ENCODE measurements at regions of chr2 and their contacts with region 1.

Region 1: DNA sequence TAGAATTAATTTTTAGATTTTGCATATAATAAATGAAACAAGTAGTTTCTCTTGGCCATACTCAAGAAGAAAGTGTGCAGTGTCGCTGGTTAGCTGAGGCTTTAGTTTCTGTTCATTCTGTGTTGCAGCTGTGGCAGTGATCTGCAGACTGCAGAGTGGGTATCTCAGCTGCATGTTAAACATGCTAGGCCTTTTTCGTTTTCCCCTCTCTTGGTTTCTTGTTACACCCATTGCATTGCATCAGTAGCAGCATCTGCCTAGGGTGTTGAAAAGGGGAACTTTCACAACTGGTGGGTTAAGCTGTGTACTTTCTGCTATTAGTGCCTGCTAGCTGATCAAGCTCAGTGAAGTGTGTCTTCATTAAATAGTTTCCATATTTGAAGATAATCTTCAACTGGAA is 51.3 kb downstream of the ACSL3 start:
- DNase-seq: peak; percentile 23
- ATAC-seq: peak; percentile 97
- H3K4me3 Mint-ChIP-seq: peak overlapping the region; percentile 75
- H3K27ac Mint-ChIP-seq: peak overlapping the region; percentile 89
- H3K4me1 Mint-ChIP-seq: peaks cover 53% of the 10 kb centered on the region
- H3K27me3 Mint-ChIP-seq: no peaks in the 10 kb centered on the region
- CTCF ChIP-seq: no peak

Region 2: DNA sequence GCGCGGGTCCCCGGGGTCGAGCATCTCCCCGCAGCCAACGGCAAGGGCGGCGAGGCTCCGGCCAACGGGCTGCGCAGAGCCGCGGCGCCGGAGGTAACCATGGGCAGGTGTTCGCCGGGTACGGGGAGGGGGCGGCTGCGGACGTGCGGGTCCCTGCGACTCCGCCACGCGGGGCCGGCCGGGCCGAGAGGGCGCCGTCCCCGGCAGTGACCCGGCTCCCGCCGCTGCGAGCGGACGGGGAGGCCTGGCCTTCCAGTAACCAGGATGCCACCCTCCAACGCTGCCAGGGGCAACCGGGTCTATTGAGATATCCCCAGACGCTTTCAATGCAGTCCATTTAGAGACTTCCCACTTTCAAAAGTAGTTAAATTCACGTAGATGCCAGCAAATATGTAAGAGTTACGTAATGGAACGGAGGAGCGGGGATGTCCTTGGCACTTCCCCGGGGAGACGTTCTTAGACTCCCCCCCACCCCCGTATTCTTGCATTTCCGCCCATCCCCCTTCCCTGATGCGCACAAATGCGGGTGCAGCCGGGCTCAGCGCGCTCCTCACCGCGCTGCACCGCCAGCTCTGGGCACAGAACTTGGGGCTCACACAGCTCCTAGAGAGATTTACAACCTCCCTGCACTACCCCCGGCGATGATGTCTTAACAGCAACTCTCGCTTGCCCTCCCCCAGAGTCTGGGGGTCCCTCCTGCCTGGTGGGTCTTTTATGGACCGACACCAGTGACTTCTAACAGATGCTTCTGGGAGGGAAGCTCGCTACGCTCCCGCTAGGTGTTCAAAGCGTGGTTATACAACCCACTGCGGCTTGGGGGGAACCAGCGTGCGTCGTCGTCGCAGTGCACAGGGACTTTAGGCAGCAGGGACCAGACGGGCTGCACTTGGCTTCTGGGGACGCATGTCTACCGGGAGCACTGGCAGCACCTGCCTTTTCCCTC is 487.1 kb before region 1 on chr2:
- CTCF ChIA-PET with region 1: no interaction called
- POLR2A ChIA-PET with region 1: no interaction called
- intact Hi-C with region 1: loop called (anchors 5 kb)
- DNase-seq: peak; percentile 32
- ATAC-seq: peak; percentile 42
- H3K4me3 Mint-ChIP-seq: peak overlapping the region; percentile 90
- H3K27ac Mint-ChIP-seq: peak overlapping the region; percentile 81
- H3K4me1 Mint-ChIP-seq: peaks cover 47% of the 10 kb centered on the region
- H3K27me3 Mint-ChIP-seq: peaks cover 23% of the 10 kb centered on the region
- CTCF ChIP-seq: no peak

Region 3: DNA sequence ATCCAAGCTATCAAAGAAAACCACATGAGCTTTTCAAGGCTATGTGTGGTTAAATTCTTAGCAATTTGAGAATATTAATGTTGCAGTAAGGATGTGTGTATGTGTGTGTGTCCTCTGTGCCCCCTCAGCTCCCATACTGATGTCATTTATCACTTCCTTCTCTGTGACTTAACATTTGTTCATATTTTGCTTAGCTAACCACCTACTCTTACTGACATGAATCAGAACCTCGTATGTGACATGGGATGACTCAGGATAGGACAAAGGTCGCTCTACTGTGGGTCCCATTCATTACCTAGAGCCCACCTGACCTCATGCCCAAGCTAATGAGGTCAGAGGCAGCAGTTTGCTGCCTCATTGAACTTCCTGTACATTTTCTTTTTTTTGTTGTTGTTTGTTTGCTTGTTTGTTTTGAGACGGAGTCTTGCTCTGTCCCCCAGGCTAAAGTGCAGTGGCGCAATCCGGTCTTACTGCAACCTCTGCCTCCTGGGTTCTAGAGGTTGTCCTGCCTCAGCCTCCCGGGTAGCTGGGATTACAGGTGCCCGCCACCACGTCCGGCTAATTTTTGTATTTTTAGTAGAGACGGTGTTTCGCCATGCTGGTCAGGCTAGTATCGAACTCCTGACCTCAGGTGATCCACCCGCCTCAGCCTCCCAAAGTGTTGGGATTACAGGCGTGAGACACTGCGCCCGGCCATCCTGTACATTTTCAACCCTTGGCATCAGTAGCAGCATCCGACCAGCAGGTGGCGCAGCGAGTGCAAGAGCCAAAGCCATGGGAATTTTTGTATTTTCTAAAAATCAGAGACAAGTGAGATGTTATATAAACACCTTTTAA is 204.2 kb before region 1 on chr2:
- CTCF ChIA-PET with region 1: interaction called, 36 read pairs
- POLR2A ChIA-PET with region 1: no interaction called
- intact Hi-C with region 1: no loop called
- DNase-seq: peak; percentile 66
- ATAC-seq: peak; percentile 72
- H3K4me3 Mint-ChIP-seq: no peak overlapping the region
- H3K27ac Mint-ChIP-seq: no peak overlapping the region
- H3K4me1 Mint-ChIP-seq: peaks cover 9% of the 10 kb centered on the region
- H3K27me3 Mint-ChIP-seq: peaks cover 17% of the 10 kb centered on the region
- CTCF ChIP-seq: no peak

Region 4: GRCh38 chr2:222860740-222861410 is 51.2 kb before region 1 on chr2 and contains the start of gene ACSL3:
- CTCF ChIA-PET with region 1: interaction called, 9 read pairs
- POLR2A ChIA-PET with region 1: interaction called, 25 read pairs
- intact Hi-C with region 1: loop called (anchors 1 kb)
- DNase-seq: peak; percentile 90
- ATAC-seq: peak; percentile 97
- H3K4me3 Mint-ChIP-seq: peak within 1 kb of the TSS; percentile 81
- H3K27ac Mint-ChIP-seq: peak within 1 kb of the TSS; percentile 87
- H3K4me1 Mint-ChIP-seq: peaks cover 7% of the 10 kb centered on the region
- H3K27me3 Mint-ChIP-seq: no peaks in the 10 kb centered on the region
- CTCF ChIP-seq: no peak
- total RNA-seq, gene ACSL3: 40.6 and 41.2 TPM in 2 replicates

Region 5: GRCh38 chr2:222969491-222969890 is 57.4 kb after region 1 on chr2:
- CTCF ChIA-PET with region 1: no interaction called
- POLR2A ChIA-PET with region 1: no interaction called
- intact Hi-C with region 1: loop called (anchors 2 kb)
- DNase-seq: no peak
- ATAC-seq: no peak
- H3K4me3 Mint-ChIP-seq: no peak overlapping the region
- H3K27ac Mint-ChIP-seq: no peak overlapping the region
- H3K4me1 Mint-ChIP-seq: no peaks in the 10 kb centered on the region
- H3K27me3 Mint-ChIP-seq: peaks cover 5% of the 10 kb centered on the region
- CTCF ChIP-seq: no peak

Region 6: DNA sequence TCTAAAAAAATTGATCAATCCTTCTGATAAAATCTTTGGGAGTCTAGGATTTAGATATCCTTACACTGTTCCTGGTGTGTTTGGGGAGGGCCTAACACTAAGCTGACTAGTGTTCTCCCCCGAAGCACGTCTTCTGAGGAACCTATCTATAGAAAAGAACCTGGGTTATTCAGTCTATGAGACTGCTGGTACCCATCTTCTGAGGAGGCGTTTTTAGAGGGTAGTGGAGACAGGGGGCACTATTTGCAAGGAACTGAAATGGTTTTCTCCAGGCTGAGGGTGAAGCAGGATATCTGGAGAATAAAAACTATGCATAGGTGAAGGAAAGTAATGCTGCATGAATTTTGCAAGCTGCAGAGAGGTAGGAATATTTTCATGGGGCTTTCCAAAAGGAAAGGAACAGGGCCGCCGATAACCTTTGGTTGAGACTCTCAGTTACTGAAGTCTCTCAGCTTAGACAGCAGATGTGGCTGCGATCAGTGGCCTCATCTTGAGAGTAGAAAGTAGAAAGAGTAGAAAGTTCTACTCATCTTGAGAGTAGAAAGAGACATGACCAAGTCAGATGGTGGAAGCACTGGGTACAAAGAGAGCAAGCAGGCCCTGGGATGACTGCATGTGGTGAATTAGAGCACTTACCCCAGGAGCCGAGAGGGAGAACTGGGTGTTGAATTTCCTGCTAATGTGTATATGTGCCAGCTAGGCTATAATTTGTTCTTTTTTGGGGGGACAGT is 108.0 kb after region 1 on chr2:
- CTCF ChIA-PET with region 1: no interaction called
- POLR2A ChIA-PET with region 1: no interaction called
- intact Hi-C with region 1: no loop called
- DNase-seq: no peak
- ATAC-seq: no peak
- H3K4me3 Mint-ChIP-seq: no peak overlapping the region
- H3K27ac Mint-ChIP-seq: no peak overlapping the region
- H3K4me1 Mint-ChIP-seq: no peaks in the 10 kb centered on the region
- H3K27me3 Mint-ChIP-seq: no peaks in the 10 kb centered on the region
- CTCF ChIP-seq: no peak

Region 7: GRCh38 chr2:223084873-223085272 is 172.8 kb after region 1 on chr2:
- CTCF ChIA-PET with region 1: no interaction called
- POLR2A ChIA-PET with region 1: no interaction called
- intact Hi-C with region 1: no loop called
- DNase-seq: no peak
- ATAC-seq: no peak
- H3K4me3 Mint-ChIP-seq: no peak overlapping the region
- H3K27ac Mint-ChIP-seq: no peak overlapping the region
- H3K4me1 Mint-ChIP-seq: no peaks in the 10 kb centered on the region
- H3K27me3 Mint-ChIP-seq: no peaks in the 10 kb centered on the region
- CTCF ChIP-seq: no peak

Region 8: DNA sequence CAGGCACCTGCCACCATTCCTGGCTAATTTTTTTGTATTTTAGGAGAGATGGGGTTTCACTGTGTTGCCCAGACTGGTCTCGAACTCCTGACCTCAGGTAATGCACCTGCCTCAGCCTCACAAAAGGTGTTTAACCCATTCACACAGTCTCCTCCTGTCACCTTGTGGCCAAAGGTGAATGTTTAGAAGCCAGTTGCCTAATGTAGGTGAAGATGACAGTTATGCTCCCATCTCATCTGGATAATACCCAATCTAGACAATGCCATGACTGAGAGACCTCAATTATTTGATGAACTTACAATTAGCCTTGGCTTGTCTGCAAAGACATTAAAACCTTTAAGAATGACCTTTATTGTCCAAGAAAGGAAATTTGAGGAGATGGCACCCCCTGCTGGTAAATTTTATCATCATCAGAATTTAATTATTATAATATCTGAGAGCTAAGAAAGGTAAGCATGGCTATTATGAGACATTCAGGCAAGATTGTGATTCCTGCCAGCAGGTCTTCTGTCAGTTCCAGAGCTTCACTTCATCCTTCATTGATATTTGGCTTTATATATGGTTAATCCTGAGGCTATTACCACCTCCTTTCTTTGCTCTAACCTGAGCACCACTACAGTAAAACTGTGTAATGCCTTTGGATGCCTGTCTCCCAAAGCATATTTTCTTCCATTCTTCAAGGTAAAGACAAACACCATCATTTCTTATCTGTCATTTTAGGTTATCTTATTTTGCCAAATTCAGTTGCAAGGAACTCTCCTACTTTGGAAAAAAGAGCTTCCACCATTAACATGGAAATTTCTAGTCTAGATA is 1372.2 kb after region 1 on chr2:
- CTCF ChIA-PET with region 1: no interaction called
- POLR2A ChIA-PET with region 1: no interaction called
- intact Hi-C with region 1: no loop called
- DNase-seq: no peak
- ATAC-seq: no peak
- H3K4me3 Mint-ChIP-seq: no peak overlapping the region
- H3K27ac Mint-ChIP-seq: no peak overlapping the region
- H3K4me1 Mint-ChIP-seq: no peaks in the 10 kb centered on the region
- H3K27me3 Mint-ChIP-seq: peaks cover 23% of the 10 kb centered on the region
- CTCF ChIP-seq: peak; percentile 58